HAP-1 (cell line): ENCODE measurements at regions of chr4 and their contacts with region 1.

Region 1: DNA sequence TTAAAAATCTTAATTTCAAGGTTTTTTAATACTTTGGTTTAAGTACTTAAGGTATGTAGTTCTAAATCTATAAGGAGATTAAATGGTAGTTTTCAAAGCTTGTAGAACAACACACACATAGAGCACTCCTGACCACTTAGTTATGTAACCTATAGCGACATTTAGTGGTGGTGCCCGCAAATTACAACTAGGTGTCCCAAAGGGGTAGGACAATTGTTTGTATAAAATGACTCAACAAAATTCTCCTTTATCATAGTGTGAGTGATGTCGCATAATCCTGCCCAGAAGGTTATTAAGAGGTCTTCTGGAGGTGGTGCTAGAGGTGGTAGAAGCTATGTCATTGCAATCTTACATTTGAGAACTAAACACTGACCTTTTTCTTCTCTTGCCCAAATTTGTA is 373.0 kb upstream of the RASGEF1B start:
- DNase-seq: peak; percentile 67 to 81
- H3K4me3 ChIP-seq: no peak overlapping the region
- H3K4me1 ChIP-seq: no peaks in the 10 kb centered on the region
- H3K27me3 ChIP-seq: no peaks in the 10 kb centered on the region

Region 2: GRCh38 chr4:81405894-81406401 is 438.8 kb before region 1 on chr4:
- in situ Hi-C with region 1: loop called (anchors 10 kb)
- DNase-seq: peak; percentile 60 to 66
- H3K4me3 ChIP-seq: no peak overlapping the region
- H3K4me1 ChIP-seq: no peaks in the 10 kb centered on the region
- H3K27me3 ChIP-seq: no peaks in the 10 kb centered on the region

Region 3: DNA sequence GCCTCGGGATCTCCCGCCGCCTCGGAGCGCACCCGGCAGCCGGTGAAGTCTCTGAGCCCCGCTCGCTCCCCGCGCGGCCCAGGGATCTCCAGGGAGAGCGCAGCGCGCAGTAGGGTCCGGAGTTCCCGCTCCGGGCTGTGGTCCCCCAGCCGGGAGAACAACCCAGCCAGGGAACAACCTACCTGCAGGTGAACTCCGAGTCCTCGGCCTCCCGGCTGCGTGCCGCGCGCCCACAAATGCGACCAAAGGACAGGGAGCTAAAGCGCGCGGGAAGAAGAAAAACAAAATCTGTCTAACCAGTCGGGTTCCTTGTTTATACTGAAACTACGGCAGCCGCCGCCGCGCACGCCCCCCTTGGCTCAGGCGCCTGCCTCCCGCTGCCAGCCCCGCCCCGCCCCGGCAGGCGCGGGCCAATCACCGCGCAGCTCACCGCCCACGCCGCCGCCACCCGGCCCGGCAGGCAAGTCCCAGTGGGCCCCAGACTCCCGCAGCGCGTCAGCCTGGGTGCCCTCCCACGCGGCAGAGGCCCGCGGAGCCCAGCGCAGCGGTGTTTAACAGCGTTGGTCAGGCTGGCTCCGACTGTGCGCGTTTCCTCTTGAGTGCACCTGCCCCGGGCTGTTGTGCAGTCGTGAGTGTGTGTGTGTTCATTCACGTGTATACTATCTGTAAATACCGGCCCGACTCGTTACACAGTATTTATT is 373.0 kb before region 1 on chr4 and contains the start of gene RASGEF1B:
- in situ Hi-C with region 1: loop called (anchors 5 kb)
- DNase-seq: peak; percentile 65 to 83
- H3K4me3 ChIP-seq: peak within 1 kb of the TSS; percentile 42
- H3K4me1 ChIP-seq: no peaks in the 10 kb centered on the region
- H3K27me3 ChIP-seq: peaks cover 17% of the 10 kb centered on the region

Region 4: GRCh38 chr4:82677321-82677720 is 832.6 kb after region 1 on chr4:
- in situ Hi-C with region 1: no loop called
- DNase-seq: no peak
- H3K4me3 ChIP-seq: no peak overlapping the region
- H3K4me1 ChIP-seq: no peaks in the 10 kb centered on the region
- H3K27me3 ChIP-seq: no peaks in the 10 kb centered on the region